ENCODE measurements at regions of chr5 and their contacts with region 1.

Region 1: DNA sequence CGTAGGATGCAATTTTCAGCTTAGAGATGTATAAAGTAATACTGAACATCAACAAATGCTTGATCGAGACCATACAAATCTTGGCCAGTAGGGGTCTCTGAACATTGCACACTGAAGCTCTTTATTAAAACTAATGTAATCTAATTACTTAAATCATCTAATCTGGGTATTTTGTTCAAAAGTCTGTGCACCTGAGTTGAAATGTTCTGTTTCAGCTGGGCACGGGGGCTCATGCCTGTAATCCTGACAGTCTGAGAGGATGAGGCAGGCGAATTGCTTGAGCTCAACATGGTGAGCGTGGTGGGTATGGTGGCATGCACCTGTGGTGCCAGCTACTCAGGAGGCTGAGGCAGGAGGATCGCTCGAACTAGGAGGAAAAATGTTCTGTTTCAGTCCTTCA is 41.0 kb downstream of the ESM1 start:
- DNase-seq: peak in 8 of 9 experiments; percentile 10 to 77 (median 47)
- ATAC-seq: peak; percentile 49
- H3K4me3 ChIP-seq: no peak overlapping the region
- H3K4me3 Mint-ChIP-seq: no peak overlapping the region
- H3K27ac ChIP-seq: no peak overlapping the region
- H3K27ac Mint-ChIP-seq: no peak overlapping the region
- H3K4me1 ChIP-seq: no peaks in the 10 kb centered on the region
- H3K4me1 Mint-ChIP-seq: no peaks in the 10 kb centered on the region
- H3K27me3 ChIP-seq: no peaks in the 10 kb centered on the region
- H3K27me3 Mint-ChIP-seq: no peaks in the 10 kb centered on the region
- CTCF ChIP-seq: peak; percentile 93

Region 2: DNA sequence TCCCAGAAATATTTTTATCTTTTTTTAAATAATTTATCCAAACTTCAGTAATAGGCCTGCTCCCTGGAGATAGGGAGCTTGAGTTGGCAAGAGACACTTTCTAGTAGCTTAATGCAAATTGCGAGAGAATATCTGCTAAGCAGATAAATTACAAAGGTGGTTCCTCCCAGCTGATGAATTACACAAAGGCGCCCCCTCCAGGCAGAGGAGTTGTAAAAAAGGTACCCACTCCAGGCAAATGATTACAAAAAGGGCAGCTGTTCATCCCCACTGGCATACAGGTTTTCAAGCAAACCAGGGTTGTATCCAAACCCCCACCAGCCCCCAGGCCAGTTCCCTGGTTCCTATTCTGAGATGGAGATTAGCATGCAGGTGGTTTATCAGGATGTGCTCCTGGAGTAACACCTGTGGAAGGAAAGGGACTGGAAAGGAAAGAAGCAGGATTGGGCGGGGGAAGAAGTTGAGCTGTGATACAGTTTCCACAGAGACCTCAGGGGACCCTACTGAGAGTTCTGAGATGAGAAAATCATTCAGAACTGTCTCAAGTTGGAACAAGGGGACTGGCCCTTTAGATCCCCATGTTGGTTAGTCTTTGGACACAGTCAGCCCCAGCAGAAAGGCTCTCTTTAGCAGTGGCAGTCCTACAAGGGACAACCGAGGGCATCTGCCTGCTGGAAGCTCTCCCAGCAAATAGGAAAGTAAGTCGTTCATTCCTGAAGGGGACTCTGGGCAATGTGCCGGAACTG is 15.5 kb after region 1 on chr5:
- CTCF ChIA-PET with region 1: interaction called, 53 read pairs
- POLR2A ChIA-PET with region 1: interaction called, 3 read pairs
- intact Hi-C with region 1: no loop called
- DNase-seq: peak in 3 of 9 experiments; percentile 12 to 22 (median 20)
- ATAC-seq: no peak
- H3K4me3 ChIP-seq: no peak overlapping the region
- H3K4me3 Mint-ChIP-seq: no peak overlapping the region
- H3K27ac ChIP-seq: no peak overlapping the region
- H3K27ac Mint-ChIP-seq: no peak overlapping the region
- H3K4me1 ChIP-seq: no peaks in the 10 kb centered on the region
- H3K4me1 Mint-ChIP-seq: peaks cover 4% of the 10 kb centered on the region
- H3K27me3 ChIP-seq: no peaks in the 10 kb centered on the region
- H3K27me3 Mint-ChIP-seq: no peaks in the 10 kb centered on the region
- CTCF ChIP-seq: no peak

Region 3: DNA sequence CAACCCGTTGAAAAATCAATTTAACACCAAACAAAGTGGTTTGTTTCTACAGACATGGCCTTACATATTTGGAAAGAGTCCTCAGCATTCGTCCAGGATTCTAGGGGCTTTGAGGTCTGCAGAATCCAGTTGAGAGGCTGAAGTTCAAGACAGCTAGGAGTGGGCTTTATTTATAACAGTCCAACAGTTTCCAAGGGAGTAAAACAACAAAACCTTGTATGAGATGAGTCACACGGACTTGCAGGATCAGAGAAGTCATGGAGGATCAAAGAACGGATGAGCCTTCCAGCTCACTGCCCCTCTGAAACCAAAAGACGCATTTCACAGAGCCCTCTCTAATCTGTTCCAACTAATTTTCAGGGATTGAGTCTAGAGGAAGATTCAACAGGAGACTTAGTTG is 52.1 kb after region 1 on chr5:
- CTCF ChIA-PET with region 1: interaction called, 11 read pairs
- POLR2A ChIA-PET with region 1: no interaction called
- intact Hi-C with region 1: no loop called
- DNase-seq: no peak
- ATAC-seq: no peak
- H3K4me3 ChIP-seq: no peak overlapping the region
- H3K4me3 Mint-ChIP-seq: no peak overlapping the region
- H3K27ac ChIP-seq: no peak overlapping the region
- H3K27ac Mint-ChIP-seq: no peak overlapping the region
- H3K4me1 ChIP-seq: no peaks in the 10 kb centered on the region
- H3K4me1 Mint-ChIP-seq: peaks cover 16% of the 10 kb centered on the region
- H3K27me3 ChIP-seq: no peaks in the 10 kb centered on the region
- H3K27me3 Mint-ChIP-seq: no peaks in the 10 kb centered on the region
- CTCF ChIP-seq: no peak

Region 4: DNA sequence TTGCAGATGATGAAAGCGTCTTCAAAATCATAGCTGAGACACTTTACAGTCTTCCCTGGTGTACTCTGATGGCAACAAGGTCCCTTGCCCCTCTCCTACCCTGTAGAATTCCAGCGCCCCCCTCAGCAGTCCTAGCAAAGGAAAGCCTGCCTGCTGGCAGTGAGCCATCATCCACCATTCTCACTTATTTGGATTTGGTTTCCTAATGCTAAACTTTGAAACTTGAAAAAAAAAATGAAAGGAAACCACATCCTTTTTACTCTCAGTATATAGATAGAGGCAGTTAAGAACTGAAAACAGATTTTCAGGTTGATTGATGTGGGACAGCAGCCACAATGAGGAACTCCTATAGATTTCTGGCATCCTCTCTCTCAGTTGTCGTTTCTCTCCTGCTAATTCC is 158.0 kb after region 1 on chr5 and contains the start of gene GZMA:
- CTCF ChIA-PET with region 1: interaction called, 51 read pairs
- POLR2A ChIA-PET with region 1: interaction called, 5 read pairs
- intact Hi-C with region 1: loop called in 1 of 2 experiments (anchors 5 kb)
- DNase-seq: peak in 7 of 9 experiments; percentile 12 to 83 (median 56)
- ATAC-seq: peak; percentile 72
- H3K4me3 ChIP-seq: peak within 1 kb of the TSS; percentile 41 to 78
- H3K4me3 Mint-ChIP-seq: peak within 1 kb of the TSS; percentile 80
- H3K27ac ChIP-seq: peak within 1 kb of the TSS; percentile 39 to 70
- H3K27ac Mint-ChIP-seq: peak within 1 kb of the TSS; percentile 86
- H3K4me1 ChIP-seq: peaks cover 55% of the 10 kb centered on the region
- H3K4me1 Mint-ChIP-seq: peaks cover 87% of the 10 kb centered on the region
- H3K27me3 ChIP-seq: no peaks in the 10 kb centered on the region
- H3K27me3 Mint-ChIP-seq: no peaks in the 10 kb centered on the region
- CTCF ChIP-seq: no peak
- total RNA-seq, gene GZMA: 13.4 to 13.6 TPM

Region 5: GRCh38 chr5:55151923-55152842 is 207.8 kb after region 1 on chr5:
- CTCF ChIA-PET with region 1: interaction called, 25 read pairs
- POLR2A ChIA-PET with region 1: interaction called, 4 read pairs
- intact Hi-C with region 1: no loop called
- DNase-seq: no peak
- ATAC-seq: no peak
- H3K4me3 ChIP-seq: no peak overlapping the region
- H3K4me3 Mint-ChIP-seq: no peak overlapping the region
- H3K27ac ChIP-seq: no peak overlapping the region
- H3K27ac Mint-ChIP-seq: no peak overlapping the region
- H3K4me1 ChIP-seq: no peaks in the 10 kb centered on the region
- H3K4me1 Mint-ChIP-seq: no peaks in the 10 kb centered on the region
- H3K27me3 ChIP-seq: no peaks in the 10 kb centered on the region
- H3K27me3 Mint-ChIP-seq: peaks cover 5% of the 10 kb centered on the region
- CTCF ChIP-seq: no peak

Measured in CD8-positive, alpha-beta T cell (primary cell).